ENCODE measurements at regions of chr18 and their contacts with region 1.

Region 1: GRCh38 chr18:79378542-79379250 is 17.0 kb upstream of the NFATC1 start:
- DNase-seq: peak; percentile 87
- CTCF ChIP-seq: peak; percentile 92

Region 2: DNA sequence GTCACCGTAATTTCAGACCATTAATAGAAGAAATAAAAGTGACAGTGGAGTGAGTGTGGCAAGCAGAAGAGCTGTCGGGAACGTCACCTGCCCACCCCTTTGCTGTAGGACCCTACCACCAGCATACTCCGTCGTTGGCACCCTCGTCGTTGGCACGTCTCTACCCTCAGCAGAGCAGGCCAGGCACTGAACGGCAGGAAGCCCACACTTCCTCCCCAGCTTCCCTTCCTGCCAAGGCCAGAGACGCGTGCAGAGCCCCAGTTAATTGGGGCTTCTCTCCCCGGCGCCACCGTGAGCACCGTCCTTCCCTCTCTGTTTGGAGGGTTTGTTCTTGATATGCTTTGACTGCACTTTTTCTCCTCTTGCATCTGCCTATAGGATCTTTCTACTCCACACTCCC is 10.0 kb before region 1 on chr18:
- CTCF ChIA-PET with region 1: interaction called, 11 read pairs
- POLR2A ChIA-PET with region 1: no interaction called
- DNase-seq: no peak
- CTCF ChIP-seq: no peak

Region 3: GRCh38 chr18:79507076-79507545 is 128.4 kb after region 1 on chr18:
- CTCF ChIA-PET with region 1: interaction called, 10 read pairs
- POLR2A ChIA-PET with region 1: no interaction called
- DNase-seq: no peak
- CTCF ChIP-seq: no peak

Region 4: DNA sequence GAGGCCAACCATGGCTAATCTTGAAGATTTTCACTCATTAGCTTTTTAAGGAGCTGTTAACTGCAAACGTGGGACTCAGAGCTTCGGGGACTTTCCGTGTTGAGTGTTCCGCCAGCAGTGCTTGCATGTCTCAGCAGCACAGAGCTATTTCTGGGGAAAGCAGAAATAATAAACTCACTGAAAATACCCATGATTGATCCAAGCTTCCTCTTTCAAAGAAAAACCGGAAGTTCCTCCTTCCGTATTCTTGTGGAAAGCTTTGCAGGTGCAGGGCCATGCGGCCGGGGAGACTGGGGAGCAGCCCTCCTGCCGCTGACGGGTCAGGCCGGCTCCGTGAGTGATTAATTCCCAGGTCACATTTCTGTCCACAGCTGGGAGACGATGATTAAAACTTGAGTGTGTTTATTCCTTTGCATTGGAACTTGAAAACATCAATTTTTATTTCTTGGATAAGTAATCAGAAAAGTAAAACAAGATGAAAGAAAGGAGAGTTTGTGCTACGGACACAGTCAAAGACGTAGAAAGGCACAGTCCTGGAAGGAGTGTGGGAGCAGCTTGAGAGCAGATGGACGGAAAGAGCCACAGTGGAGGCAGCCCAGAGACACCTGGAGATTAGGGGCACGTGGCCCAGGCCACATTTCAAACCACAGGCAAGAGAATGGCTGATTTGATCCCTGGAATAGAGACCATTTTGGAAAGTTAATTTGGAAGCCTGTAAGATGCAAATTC is 246.7 kb after region 1 on chr18:
- CTCF ChIA-PET with region 1: interaction called, 13 read pairs
- POLR2A ChIA-PET with region 1: no interaction called
- DNase-seq: peak; percentile 74
- CTCF ChIP-seq: no peak

Region 5: DNA sequence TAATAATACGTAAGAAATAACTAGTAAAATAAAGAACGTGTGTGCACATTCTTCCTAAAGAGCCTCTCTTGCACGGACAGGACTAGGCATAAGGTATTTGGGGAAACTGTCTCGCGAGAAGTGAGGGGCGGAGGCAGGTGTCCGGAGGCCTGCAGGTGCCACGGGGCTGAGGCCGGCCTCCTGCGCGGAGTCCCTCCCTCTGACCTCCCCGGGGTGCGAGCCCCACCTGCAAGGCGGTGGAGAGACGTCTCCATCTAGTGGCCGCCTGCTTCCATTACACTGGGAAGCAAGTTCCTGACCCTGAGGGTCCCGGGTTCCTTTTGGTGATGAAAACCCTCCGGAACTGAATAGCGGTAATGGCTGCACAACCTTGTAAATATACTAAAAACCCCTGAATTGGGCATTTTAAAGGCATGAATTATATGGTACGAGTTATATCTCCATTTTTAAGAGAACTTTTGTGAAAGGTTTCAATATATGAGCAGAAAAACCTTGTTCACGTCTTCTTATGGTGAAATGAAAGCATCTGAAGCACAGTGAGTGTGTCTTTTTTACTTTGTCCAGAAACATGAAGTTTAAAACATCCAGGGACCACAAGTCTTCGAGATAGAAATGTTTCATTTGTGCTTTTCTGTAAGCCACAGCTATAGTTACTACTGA is 265.4 kb after region 1 on chr18:
- CTCF ChIA-PET with region 1: interaction called, 78 read pairs
- POLR2A ChIA-PET with region 1: no interaction called
- DNase-seq: peak; percentile 91
- CTCF ChIP-seq: peak; percentile 93

Measured in GM10248 (cell line).